Breast epithelium (tissue), 4 donors: ENCODE measurements at regions of chr2 and their contacts with region 1.

Region 1: DNA sequence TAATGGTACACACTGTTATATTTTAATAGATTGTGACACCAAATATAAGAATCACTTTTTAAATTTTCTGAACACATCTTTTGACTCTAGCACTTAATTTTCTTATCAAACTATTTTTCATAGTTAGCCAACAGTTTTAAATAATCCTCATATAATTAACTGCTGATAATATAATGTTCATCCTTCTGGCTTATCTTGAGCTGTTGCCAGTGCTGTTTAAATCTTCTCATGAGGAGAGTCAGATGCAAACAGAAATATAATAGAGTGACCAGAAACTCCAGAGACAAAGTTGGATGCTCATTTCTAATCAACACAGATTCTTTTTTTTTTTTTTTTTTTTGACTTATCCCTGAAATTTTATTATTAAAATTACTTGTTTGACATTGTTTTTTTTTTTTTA is 282.6 kb downstream of the SPAG16 start:
- DNase-seq: no peak
- H3K4me3 ChIP-seq: no peak overlapping the region
- H3K27ac ChIP-seq: no peak overlapping the region
- H3K4me1 ChIP-seq: no peaks in the 10 kb centered on the region
- H3K27me3 ChIP-seq: no peaks in the 10 kb centered on the region
- CTCF ChIP-seq: no peak
- POLR2A ChIP-seq: no peak

Region 2: GRCh38 chr2:213189001-213189899 is 377.6 kb before region 1 on chr2:
- intact Hi-C with region 1: no loop called
- DNase-seq: no peak
- H3K4me3 ChIP-seq: no peak overlapping the region
- H3K27ac ChIP-seq: no peak overlapping the region
- H3K4me1 ChIP-seq: no peaks in the 10 kb centered on the region
- H3K27me3 ChIP-seq: no peaks in the 10 kb centered on the region
- CTCF ChIP-seq: no peak
- POLR2A ChIP-seq: no peak

Region 3: GRCh38 chr2:214543386-214543965 is 976.6 kb after region 1 on chr2:
- intact Hi-C with region 1: loop called (anchors 10 kb)
- DNase-seq: no peak
- H3K4me3 ChIP-seq: no peak overlapping the region
- H3K27ac ChIP-seq: no peak overlapping the region
- H3K4me1 ChIP-seq: no peaks in the 10 kb centered on the region
- H3K27me3 ChIP-seq: no peaks in the 10 kb centered on the region
- CTCF ChIP-seq: no peak
- POLR2A ChIP-seq: no peak